Naive thymus-derived CD4-positive, alpha-beta T cell (primary cell): ENCODE measurements at regions of chr17 and their contacts with region 1.

Region 1: GRCh38 chr17:44210342-44211192 is 8.9 kb downstream of the UBTF start:
- DNase-seq: peak; percentile 82 to 97 (median 93)
- ATAC-seq: peak; percentile 99
- H3K4me3 ChIP-seq: no peak overlapping the region
- H3K4me3 Mint-ChIP-seq: peak overlapping the region; percentile 16 to 77 (median 60)
- H3K27ac ChIP-seq: peak overlapping the region; percentile 68
- H3K27ac Mint-ChIP-seq: peak overlapping the region; percentile 52 to 90 (median 81)
- H3K4me1 ChIP-seq: peaks cover 25 to 47% of the 10 kb centered on the region in 2 donors
- H3K4me1 Mint-ChIP-seq: peaks cover 30 to 67% (median 50%) of the 10 kb centered on the region in 7 donors
- H3K27me3 ChIP-seq: no peaks in the 10 kb centered on the region
- H3K27me3 Mint-ChIP-seq: no peaks in the 10 kb centered on the region

Region 2: DNA sequence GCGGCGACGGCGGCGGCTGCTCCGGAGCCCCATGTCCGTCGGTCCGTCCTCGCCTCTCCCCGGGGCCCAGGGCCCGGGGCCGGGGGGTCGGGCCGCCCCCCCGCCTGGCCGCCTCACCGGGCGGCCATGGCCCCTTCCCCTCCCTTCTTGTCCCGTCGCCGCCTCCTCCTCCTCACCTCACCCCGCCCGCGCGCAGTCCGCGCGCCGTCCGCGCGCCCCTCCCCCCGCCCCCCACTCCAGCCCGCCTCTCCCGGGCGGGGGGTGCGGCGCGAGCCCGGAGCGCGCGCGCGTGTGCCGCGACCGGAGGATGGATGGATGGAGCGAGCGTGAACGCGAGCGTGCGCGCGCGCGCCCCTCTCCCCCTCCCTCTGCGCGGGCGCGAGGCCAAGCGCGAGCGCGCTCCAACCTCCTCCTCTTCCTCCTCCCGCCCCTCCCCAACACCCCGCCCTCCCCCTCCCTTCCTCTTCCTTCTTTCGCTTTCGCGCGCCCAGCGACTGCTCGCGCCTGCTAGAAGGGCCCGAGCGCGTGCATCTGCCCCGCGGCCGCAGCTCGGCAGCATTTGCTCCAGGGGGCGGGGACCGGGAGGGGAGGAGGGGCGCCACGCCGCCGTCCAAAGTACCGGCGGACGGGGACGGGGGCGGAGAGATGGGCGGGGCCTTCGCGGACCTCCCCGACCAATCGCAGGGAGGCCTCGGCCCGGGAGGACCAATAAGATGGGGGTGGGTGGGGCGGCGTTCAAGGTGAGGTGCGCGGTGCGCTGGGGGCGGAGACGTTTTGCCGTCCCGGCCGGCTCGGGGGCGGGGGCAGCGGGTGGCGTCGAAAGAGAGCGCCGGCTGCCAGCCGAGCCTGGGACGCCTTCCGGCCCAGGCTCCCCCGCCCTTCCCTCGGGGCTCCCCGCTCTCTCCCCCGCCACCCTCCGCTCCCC is 10.8 kb before region 1 on chr17 and contains the start of gene ATXN7L3:
- CTCF ChIA-PET with region 1: interaction called, 14 read pairs
- POLR2A ChIA-PET with region 1: interaction called, 319 read pairs
- intact Hi-C with region 1: loop called (anchors 1 kb)
- DNase-seq: peak; percentile 90 to 99 (median 98)
- ATAC-seq: peak; percentile 91
- H3K4me3 ChIP-seq: peak within 1 kb of the TSS; percentile 68
- H3K4me3 Mint-ChIP-seq: peak within 1 kb of the TSS; percentile 90 to 97 (median 92)
- H3K27ac ChIP-seq: peak within 1 kb of the TSS; percentile 93
- H3K27ac Mint-ChIP-seq: peak within 1 kb of the TSS; percentile 91 to 97 (median 96)
- H3K4me1 ChIP-seq: peaks cover 27 to 34% of the 10 kb centered on the region in 2 donors
- H3K4me1 Mint-ChIP-seq: peaks cover 39 to 61% (median 53%) of the 10 kb centered on the region in 7 donors
- H3K27me3 ChIP-seq: no peaks in the 10 kb centered on the region
- H3K27me3 Mint-ChIP-seq: no peaks in the 10 kb centered on the region
- total RNA-seq, gene ATXN7L3: 93.5 to 130 (median 124) TPM

Region 3: DNA sequence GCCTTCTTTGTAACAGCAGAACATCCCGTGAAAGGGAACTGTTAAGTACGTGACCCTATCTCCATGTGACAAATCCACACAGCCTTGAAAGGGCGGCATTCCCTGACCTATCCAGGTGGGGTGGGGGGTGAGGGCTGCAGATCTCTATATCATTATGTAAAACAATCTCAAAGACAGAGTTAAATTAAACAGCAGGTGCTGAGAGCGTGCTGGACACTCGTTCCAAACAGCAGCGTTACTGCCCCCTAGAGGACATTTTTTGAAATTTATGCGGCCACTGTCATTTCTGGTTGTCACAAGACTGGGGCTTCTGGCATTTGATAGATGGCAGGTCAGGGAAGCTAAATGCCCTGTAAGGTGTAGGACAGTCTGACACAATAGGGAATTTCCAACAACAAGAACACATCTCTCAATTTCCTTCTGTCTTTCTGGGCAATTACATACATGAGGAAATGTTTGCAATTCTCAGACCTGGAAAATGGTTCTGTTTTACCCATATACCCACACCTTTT is 120.7 kb after region 1 on chr17:
- CTCF ChIA-PET with region 1: interaction called, 47 read pairs
- POLR2A ChIA-PET with region 1: interaction called, 60 read pairs
- intact Hi-C with region 1: loop called (anchors 1 kb)
- DNase-seq: peak in 8 of 9 donors; percentile 62 to 79 (median 71)
- ATAC-seq: peak; percentile 46
- H3K4me3 ChIP-seq: no peak overlapping the region
- H3K4me3 Mint-ChIP-seq: peak overlapping the region in 1 of 10 donors; percentile 24
- H3K27ac ChIP-seq: no peak overlapping the region
- H3K27ac Mint-ChIP-seq: peak overlapping the region in 3 of 9 donors; percentile 19 to 67 (median 43)
- H3K4me1 ChIP-seq: peaks cover 4 to 10% of the 10 kb centered on the region in 2 donors
- H3K4me1 Mint-ChIP-seq: peaks cover 0 to 18% (median 14%) of the 10 kb centered on the region in 7 donors
- H3K27me3 ChIP-seq: no peaks in the 10 kb centered on the region
- H3K27me3 Mint-ChIP-seq: peaks cover 0 to 2% (median 0%) of the 10 kb centered on the region in 5 donors

Region 4: GRCh38 chr17:44350733-44351226 is 140.2 kb after region 1 on chr17:
- CTCF ChIA-PET with region 1: interaction called, 29 read pairs
- POLR2A ChIA-PET with region 1: interaction called, 6 read pairs
- intact Hi-C with region 1: loop called (anchors 1 kb)
- DNase-seq: peak; percentile 49 to 76 (median 70)
- ATAC-seq: peak; percentile 72
- H3K4me3 ChIP-seq: no peak overlapping the region
- H3K4me3 Mint-ChIP-seq: peak overlapping the region in 1 of 10 donors; percentile 17
- H3K27ac ChIP-seq: no peak overlapping the region
- H3K27ac Mint-ChIP-seq: no peak overlapping the region
- H3K4me1 ChIP-seq: peaks cover 4 to 6% of the 10 kb centered on the region in 2 donors
- H3K4me1 Mint-ChIP-seq: peaks cover 5 to 18% (median 12%) of the 10 kb centered on the region in 7 donors
- H3K27me3 ChIP-seq: no peaks in the 10 kb centered on the region
- H3K27me3 Mint-ChIP-seq: peaks cover 0 to 10% (median 0%) of the 10 kb centered on the region in 5 donors